Tibial artery (tissue), 4 donors: ENCODE measurements at regions of chr6 and their contacts with region 1.

Region 1: DNA sequence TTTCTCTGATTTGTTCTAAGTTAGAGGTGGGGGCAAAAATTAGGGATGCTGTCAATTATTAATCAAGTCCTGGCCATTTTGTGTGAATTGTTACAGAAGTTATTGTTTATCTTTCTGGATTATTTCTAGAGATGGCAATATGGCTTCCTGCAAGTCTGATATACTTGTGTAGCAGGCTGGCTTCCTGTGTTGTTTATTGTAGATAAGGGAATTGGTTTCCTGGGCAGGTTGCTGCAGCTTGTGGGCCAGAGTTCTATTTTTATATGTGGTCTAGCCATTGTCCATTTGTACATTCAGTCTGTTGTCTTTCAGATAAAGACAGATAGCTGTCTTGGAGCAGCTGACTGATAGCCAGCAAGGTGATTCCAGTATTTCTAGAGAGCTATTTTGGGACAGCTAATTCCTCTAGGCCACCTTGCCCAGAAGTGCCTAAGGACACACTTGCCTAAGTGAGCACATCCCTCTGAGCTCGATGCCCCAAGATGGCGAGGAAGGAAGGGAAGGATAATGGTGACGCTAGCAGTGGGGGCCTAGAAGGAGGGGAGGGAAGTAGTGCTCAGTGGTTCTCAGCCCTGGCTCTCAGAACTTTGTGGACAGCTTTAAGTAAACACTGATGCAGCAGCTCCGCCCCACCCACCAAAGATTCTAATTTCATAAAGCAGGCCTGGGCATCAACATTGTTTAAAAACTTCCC is 25.5 kb downstream of the DDO start:
- DNase-seq: no peak
- H3K4me3 ChIP-seq: no peak overlapping the region
- H3K27ac ChIP-seq: no peak overlapping the region
- H3K4me1 ChIP-seq: no peaks in the 10 kb centered on the region
- H3K27me3 ChIP-seq: no peaks in the 10 kb centered on the region
- CTCF ChIP-seq: no peak

Region 2: DNA sequence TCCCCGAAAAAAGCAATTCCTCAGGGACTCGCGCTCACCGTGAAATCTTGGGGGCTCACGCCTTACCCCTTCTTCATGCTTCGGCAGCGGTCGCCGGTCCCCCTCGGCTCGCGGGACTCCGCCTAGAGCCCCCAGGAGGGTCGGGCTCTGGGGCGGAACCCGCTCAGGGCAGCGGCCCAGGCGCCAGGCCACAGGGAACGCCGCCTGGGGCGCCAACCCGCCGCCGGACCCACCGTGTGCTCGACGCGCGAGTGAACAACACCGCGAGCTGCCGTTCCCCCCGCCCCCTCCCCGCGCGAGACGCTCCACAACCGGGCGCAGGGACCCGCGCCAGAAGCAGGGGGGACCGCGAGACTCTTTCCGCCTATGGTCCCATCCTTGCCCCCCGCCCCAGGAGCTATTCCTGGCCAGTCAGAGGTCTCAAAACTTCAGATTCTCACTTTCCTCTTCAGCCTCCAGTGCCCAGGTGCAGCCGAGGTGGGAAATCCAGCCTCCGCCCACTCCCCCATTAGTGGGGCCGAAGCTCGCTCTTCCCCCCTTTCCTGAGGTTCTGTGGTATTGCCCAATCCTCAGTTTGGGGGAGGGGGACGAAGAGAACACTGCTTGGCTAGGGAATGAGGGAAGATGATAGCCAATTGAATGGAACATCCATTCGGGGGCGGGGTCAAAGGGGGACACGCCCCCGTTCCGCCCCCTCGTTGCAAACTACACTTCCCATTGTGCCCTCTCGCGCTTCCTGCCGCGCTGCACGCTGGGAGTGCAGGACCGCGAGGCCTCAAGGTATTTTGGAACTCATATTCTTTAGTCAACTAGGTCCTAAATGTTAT is 210.2 kb before region 1 on chr6 and contains the start of gene WASF1:
- intact Hi-C with region 1: loop called (anchors 2 kb)
- DNase-seq: peak; percentile 95 to 96
- H3K4me3 ChIP-seq: peak within 1 kb of the TSS; percentile 66 to 71
- H3K27ac ChIP-seq: peak within 1 kb of the TSS; percentile 75 to 85
- H3K4me1 ChIP-seq: peaks cover 0 to 38% (median 32%) of the 10 kb centered on the region in 4 donors
- H3K27me3 ChIP-seq: no peaks in the 10 kb centered on the region
- CTCF ChIP-seq: peak in 1 of 2 experiments; percentile 24

Region 3: GRCh38 chr6:110341663-110342596 is 47.9 kb before region 1 on chr6:
- intact Hi-C with region 1: no loop called
- DNase-seq: no peak
- H3K4me3 ChIP-seq: no peak overlapping the region
- H3K27ac ChIP-seq: peak overlapping the region in 1 of 2 donors; percentile 59
- H3K4me1 ChIP-seq: peaks cover 0 to 54% (median 12%) of the 10 kb centered on the region in 4 donors
- H3K27me3 ChIP-seq: no peaks in the 10 kb centered on the region
- CTCF ChIP-seq: peak in 1 of 2 experiments; percentile 13

Region 4: DNA sequence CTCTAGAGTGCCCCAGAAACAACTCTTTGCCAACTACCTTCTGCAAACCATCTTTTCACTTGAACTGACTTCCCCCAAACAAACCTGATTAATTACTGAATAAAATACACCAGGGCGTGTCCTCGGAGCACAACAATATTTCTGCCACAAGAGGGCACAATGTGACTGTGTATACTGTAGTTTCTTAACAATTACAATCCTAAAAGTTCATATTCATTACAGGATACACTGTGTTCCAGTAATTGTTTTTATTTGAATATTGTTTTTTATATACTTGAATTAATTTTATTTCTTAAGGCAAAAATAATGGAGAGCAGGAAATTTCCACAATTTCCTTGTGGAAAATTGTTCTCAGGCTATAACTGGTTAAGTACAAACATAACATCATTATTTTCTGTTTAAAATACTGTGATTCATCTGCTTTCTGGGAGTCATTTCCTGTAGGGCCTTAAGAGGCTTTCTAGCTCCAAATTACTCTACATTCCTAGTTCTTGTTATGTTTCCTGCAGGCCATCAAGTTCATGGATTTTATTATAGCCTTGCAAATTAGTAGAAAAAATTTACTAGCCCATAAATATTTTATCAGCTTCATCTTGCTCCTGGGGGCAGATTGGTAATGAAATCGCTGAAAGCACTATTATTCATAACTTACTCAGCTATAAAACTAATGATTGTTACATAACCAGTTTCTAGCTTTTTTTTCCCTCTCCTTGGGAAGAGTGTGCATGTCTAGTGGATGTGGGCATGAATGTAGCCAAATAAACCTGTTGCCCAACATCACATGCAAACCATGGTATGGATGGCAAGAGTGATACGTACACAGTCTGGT is 138.5 kb after region 1 on chr6:
- intact Hi-C with region 1: no loop called
- DNase-seq: peak in 1 of 2 donors; percentile 56
- H3K4me3 ChIP-seq: no peak overlapping the region
- H3K27ac ChIP-seq: no peak overlapping the region
- H3K4me1 ChIP-seq: peaks cover 0 to 7% (median 3%) of the 10 kb centered on the region in 4 donors
- H3K27me3 ChIP-seq: no peaks in the 10 kb centered on the region
- CTCF ChIP-seq: peak; percentile 66 to 68